AG04450 (cell line): ENCODE measurements at regions of chr3 and their contacts with region 1.

Region 1: DNA sequence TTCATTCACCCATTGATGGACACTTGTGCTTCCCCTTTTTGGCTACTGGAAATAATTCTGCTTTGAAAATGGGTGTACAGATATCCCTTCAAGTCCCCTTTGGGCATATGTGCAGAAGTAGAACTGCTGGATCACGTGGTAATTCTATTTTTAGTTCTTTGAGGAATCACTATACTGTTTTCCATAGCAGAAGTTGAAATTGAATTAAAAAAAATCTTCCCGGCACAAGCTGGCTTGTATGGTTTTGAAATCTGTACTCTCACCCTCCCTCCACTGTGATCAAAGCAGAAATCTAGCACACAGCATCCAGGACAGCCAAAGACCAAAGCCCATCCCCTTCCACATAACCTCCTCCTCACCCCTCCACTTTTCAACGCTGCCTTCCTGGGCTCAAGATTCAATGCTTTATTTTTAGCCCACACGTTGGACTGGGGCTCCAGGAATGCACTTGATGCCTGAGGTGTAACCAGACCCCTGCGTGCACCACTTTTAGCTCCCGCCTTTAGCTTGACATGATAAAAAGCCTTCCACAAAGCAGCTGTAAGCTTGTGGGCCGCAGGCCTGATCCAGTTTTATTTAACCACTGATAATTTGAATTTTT is 29.9 kb downstream of the TMEM40 start:
- DNase-seq: no peak
- H3K4me3 ChIP-seq: no peak overlapping the region
- H3K27ac ChIP-seq: no peak overlapping the region
- H3K27me3 ChIP-seq: no peaks in the 10 kb centered on the region
- CTCF ChIP-seq: no peak

Region 2: DNA sequence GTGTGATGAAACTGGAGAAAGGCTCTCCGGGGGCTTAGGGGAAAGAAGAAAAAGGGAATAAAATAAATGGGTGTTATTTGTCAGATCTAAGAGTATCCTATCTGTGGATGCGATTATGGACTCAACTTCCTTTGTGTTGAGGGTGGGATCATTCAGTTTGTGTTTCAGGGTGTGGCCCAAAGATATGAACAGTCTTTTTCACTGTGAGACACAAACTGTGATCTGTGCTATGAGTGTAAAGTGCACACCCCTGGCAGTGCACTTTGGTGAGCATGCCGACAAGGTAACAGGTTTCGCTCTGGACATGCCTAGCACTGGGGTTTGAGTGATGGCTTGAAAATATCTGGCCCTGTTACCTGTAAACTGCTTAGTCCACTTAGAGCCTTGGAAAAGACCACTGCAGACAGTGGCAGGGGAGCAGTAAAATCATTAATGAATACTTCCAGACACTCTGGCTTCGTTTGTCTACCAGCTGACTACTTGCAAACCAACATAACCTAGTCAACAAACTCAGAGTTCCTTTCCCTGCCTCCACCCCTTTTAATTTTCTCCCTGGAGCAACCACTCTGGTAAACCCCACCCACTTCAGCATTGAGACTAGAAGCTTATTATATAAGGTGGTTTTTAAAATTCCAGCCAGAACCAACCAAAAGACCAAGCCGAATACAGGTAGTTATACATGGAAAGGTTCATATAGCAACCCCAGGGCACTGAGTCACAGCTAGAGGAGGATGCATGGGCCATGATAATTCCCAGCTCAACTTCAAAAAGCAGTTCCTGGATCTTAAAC is 937.6 kb before region 1 on chr3:
- CTCF ChIA-PET with region 1: interaction called, 11 read pairs
- POLR2A ChIA-PET with region 1: no interaction called
- DNase-seq: no peak
- H3K4me3 ChIP-seq: no peak overlapping the region
- H3K27ac ChIP-seq: no peak overlapping the region
- H3K27me3 ChIP-seq: no peaks in the 10 kb centered on the region
- CTCF ChIP-seq: no peak

Region 3: DNA sequence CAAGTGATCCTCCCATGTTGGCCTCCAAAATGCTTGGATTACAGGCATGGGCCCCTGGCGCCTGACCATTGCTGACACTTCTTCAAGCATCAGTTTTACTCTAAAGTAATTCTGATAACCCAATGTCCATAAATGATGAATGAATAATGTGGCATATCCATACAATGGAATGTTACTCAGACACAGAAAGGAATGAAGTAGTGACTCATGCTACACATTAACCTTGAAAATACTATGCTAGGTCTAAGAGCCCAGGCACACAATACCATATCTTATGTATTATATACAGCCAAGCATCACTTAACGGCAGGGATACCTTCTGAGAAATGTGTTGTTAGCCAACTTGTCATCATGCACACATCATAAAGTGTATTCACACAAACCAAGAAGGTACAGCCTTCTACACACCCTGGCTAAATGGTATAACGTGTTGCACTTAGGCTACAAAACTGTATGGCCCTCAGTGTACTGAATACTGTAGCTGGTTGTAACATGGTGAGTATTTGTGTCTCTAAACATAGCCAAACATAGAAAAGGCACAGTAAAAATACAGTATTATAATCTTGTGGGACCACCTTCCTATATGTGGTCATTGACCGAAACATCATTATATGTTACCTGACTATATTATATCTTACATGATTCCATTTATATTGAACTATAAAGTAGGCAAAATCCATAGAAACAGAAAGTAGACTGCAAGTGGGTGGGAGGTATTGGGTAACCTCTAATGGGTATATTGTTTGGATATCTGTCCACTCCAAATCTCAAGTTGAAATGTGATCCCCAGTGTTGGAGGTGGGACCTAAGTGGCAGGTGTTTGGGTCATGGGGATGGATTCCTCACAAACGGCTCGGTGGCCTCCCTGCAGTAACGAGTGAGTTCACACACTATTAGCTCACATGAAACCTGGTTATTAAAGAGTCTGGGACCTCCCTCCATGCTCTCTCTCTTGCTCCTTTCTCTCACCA is 140.8 kb before region 1 on chr3:
- CTCF ChIA-PET with region 1: no interaction called
- POLR2A ChIA-PET with region 1: interaction called, 13 read pairs
- DNase-seq: no peak
- H3K4me3 ChIP-seq: no peak overlapping the region
- H3K27ac ChIP-seq: no peak overlapping the region
- H3K27me3 ChIP-seq: no peaks in the 10 kb centered on the region
- CTCF ChIP-seq: no peak

Region 4: DNA sequence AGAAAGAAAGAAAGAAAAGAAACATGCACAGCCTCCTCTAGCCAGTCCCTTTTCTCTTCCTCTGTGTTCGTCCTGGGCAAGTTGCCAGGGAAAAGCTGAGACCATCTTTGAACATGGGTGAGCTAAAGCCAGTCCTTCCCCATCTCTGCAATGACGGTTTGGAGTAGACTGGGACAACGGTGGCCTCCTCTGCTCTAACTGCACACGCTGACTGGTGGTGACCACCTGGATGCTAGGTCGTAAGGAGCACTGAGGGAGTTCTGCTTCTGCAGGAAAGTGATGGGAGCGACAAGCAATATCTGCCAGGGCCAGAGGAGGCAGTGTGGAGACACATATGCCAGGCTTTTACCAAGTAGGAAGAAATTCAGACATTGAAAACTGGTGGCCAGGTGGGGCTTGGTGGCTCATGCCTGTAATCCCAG is 579.2 kb after region 1 on chr3:
- CTCF ChIA-PET with region 1: no interaction called
- POLR2A ChIA-PET with region 1: no interaction called
- DNase-seq: no peak
- H3K4me3 ChIP-seq: no peak overlapping the region
- H3K27ac ChIP-seq: no peak overlapping the region
- H3K27me3 ChIP-seq: peaks cover 3% of the 10 kb centered on the region
- CTCF ChIP-seq: peak; percentile 47